Natural killer cell (primary cell): ENCODE measurements at regions of chr3 and their contacts with region 1.

Region 1: DNA sequence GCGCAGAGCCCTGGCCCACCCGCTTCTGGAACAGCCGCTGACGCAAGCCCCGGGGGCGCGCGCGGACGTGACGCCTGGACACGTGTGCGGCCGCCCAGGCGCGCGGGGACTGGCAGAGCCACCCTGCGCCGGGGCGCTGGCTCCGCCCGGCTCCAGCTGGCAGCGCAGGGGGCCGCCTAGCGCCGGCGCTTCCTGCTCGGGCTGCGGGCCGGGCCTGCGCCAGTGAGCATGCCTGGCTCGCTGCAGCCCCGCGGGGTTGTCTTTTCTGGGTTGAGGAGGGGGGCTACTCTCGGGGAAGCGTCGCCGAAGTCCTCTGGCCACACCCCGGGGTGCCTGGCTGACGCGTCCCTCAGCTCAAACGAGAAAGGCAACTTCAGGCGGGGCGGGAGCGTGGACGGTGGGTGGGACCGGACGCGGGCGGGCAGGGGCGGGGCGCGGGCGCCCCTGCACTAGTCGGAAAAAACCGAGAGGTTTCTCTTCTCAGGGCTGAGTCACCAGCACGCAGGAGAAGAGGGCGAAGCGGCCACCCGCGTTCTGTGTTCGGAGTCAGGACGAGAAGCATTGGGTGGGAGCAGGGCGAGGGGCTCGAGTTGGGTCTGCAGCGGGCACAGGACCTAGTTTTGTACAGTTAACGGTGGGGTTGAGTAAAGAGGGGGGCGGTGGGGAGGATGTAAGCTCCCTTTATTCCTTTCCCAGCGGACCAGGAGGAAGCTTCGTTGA is at the start of gene SIAH2:
- DNase-seq: peak; percentile 94 to 97
- ATAC-seq: peak; percentile 76 to 93 (median 81)
- H3K4me3 ChIP-seq: peak within 1 kb of the TSS; percentile 81
- H3K4me3 Mint-ChIP-seq: peak within 1 kb of the TSS; percentile 96
- H3K27ac ChIP-seq: peak within 1 kb of the TSS; percentile 99
- H3K27ac Mint-ChIP-seq: peak within 1 kb of the TSS; percentile 98 to 100
- H3K4me1 ChIP-seq: peaks cover 13% of the 10 kb centered on the region
- H3K4me1 Mint-ChIP-seq: peaks cover 43 to 46% of the 10 kb centered on the region in 2 donors
- H3K27me3 ChIP-seq: no peaks in the 10 kb centered on the region
- H3K27me3 Mint-ChIP-seq: no peaks in the 10 kb centered on the region
- CTCF ChIP-seq: no peak
- total RNA-seq, gene SIAH2: 22.7 to 25.7 (median 23.8) TPM

Region 2: GRCh38 chr3:150408221-150409102 is 354.8 kb before region 1 on chr3 and contains the start of gene TSC22D2:
- intact Hi-C with region 1: loop called (anchors 2 kb)
- DNase-seq: peak; percentile 97 to 99
- ATAC-seq: peak; percentile 68 to 86 (median 77)
- H3K4me3 ChIP-seq: peak within 1 kb of the TSS; percentile 98
- H3K4me3 Mint-ChIP-seq: peak within 1 kb of the TSS; percentile 92
- H3K27ac ChIP-seq: peak within 1 kb of the TSS; percentile 99
- H3K27ac Mint-ChIP-seq: peak within 1 kb of the TSS; percentile 90 to 96
- H3K4me1 ChIP-seq: peaks cover 16% of the 10 kb centered on the region
- H3K4me1 Mint-ChIP-seq: peaks cover 48 to 49% of the 10 kb centered on the region in 2 donors
- H3K27me3 ChIP-seq: no peaks in the 10 kb centered on the region
- H3K27me3 Mint-ChIP-seq: no peaks in the 10 kb centered on the region
- CTCF ChIP-seq: no peak
- total RNA-seq, gene TSC22D2: 50.1 to 66.3 (median 63.0) TPM

Region 3: DNA sequence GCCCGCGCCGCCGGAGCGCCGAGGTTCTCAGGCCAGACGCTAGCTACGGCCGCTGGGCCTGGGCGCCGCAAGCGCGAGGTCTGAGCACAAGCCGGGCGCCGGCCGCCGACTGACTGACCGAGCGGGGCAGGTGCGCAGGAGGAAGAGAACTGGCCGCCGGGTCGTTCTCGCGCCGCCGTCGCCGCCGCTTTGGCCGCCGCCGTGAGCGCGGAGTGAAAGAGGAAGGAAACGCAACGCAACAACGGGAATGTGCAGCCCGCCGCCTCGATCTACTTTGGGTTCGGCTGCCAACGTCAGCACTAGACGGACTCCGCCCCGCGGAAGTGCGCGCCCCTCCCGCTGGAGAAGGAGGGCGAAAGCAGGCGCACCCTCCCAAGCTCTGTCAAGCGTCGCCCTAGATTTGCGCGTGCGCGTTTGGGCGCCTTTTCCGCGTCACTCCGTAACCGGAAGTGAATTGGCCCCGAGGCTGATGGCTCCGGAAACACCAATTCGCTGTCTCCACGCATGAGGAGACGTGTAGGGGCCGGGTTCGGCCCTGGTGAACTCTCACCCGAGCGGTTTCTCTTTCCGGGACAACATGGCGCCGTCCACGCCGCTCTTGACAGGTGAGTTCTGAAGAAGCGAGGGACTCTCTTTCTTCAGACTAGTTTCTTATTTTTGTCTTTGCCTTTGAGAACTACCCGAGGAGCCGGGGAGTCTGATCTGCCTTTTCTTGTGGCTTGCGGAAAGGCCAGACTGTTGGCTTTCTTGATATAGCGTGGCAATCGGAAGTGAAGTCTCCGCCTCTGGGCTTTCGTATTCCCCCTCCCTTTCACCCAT is 216.8 kb before region 1 on chr3 and contains the starts of genes EIF2A and SERP1:
- intact Hi-C with region 1: loop called (anchors 1 kb)
- DNase-seq: peak; percentile 99 to 100
- ATAC-seq: peak; percentile 87 to 97 (median 88)
- H3K4me3 ChIP-seq: peak within 1 kb of the TSS; percentile 61
- H3K4me3 Mint-ChIP-seq: peak within 1 kb of the TSS; percentile 96
- H3K27ac ChIP-seq: peak within 1 kb of the TSS; percentile 87
- H3K27ac Mint-ChIP-seq: peak within 1 kb of the TSS; percentile 97
- H3K4me1 ChIP-seq: peaks cover 6% of the 10 kb centered on the region
- H3K4me1 Mint-ChIP-seq: peaks cover 61 to 69% of the 10 kb centered on the region in 2 donors
- H3K27me3 ChIP-seq: no peaks in the 10 kb centered on the region
- H3K27me3 Mint-ChIP-seq: no peaks in the 10 kb centered on the region
- CTCF ChIP-seq: no peak
- total RNA-seq, gene EIF2A: 102 to 124 (median 108) TPM
- total RNA-seq, gene SERP1: 91.1 to 106 (median 94.9) TPM

Region 4: DNA sequence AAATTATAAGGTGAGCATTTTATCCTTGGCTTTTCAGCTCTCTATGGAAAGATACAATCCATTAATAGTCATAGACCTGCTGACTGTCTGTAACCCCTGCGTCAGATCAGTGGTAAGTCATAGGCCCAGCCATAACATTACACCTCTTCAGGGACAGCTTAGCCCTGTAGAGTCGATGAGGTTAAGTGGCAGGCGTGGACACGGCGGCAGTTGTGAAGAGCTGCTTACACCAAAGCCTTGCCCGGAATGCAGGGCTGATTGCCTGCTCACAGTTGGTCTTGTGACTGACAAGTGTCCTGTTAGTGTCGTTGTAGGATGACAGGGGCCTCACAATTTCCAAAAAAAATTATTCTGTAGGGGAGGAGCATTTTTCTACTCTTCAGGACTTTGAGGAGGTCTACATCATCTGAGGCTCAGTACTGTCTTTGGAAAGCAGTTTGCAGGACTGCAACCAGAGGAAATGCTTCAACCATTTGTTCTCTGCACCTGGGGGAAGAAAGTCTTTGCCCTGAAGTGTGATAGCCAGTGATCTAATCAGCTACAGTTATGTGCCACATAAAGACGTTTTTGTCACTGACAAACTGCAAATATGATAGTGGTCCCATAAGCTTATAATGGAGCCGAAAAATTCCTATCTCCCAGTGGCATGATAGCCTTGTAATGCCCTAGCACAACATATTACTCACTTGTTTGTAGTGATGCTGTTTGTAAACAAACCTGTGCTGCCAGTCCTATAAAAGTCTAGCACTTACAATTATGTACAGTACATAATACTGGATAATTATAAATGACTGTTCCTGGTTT is 175.1 kb before region 1 on chr3:
- intact Hi-C with region 1: no loop called
- DNase-seq: no peak
- ATAC-seq: peak in 2 of 3 donors; percentile 25 to 59
- H3K4me3 ChIP-seq: no peak overlapping the region
- H3K4me3 Mint-ChIP-seq: no peak overlapping the region
- H3K27ac ChIP-seq: no peak overlapping the region
- H3K27ac Mint-ChIP-seq: peak overlapping the region in 1 of 2 donors; percentile 48
- H3K4me1 ChIP-seq: no peaks in the 10 kb centered on the region
- H3K4me1 Mint-ChIP-seq: no peaks in the 10 kb centered on the region
- H3K27me3 ChIP-seq: no peaks in the 10 kb centered on the region
- H3K27me3 Mint-ChIP-seq: no peaks in the 10 kb centered on the region
- CTCF ChIP-seq: no peak

Region 5: GRCh38 chr3:150703299-150704134 is 59.8 kb before region 1 on chr3 and contains the start of gene ERICH6:
- intact Hi-C with region 1: loop called (anchors 2 kb)
- DNase-seq: peak; percentile 84 to 86
- ATAC-seq: peak; percentile 90 to 97 (median 91)
- H3K4me3 ChIP-seq: peak within 1 kb of the TSS; percentile 84
- H3K4me3 Mint-ChIP-seq: peak within 1 kb of the TSS; percentile 99
- H3K27ac ChIP-seq: peak within 1 kb of the TSS; percentile 96
- H3K27ac Mint-ChIP-seq: peak within 1 kb of the TSS; percentile 99 to 100
- H3K4me1 ChIP-seq: peaks cover 27% of the 10 kb centered on the region
- H3K4me1 Mint-ChIP-seq: peaks cover 25 to 34% of the 10 kb centered on the region in 2 donors
- H3K27me3 ChIP-seq: no peaks in the 10 kb centered on the region
- H3K27me3 Mint-ChIP-seq: no peaks in the 10 kb centered on the region
- CTCF ChIP-seq: no peak
- total RNA-seq, gene ERICH6: 0.35 to 3.7 (median 3.6) TPM

Region 6: GRCh38 chr3:150721285-150722130 is 41.8 kb before region 1 on chr3:
- intact Hi-C with region 1: loop called (anchors 5 kb)
- DNase-seq: peak in 1 of 2 donors; percentile 84
- ATAC-seq: peak; percentile 87 to 96 (median 94)
- H3K4me3 ChIP-seq: no peak overlapping the region
- H3K4me3 Mint-ChIP-seq: no peak overlapping the region
- H3K27ac ChIP-seq: no peak overlapping the region
- H3K27ac Mint-ChIP-seq: no peak overlapping the region
- H3K4me1 ChIP-seq: peaks cover 3% of the 10 kb centered on the region
- H3K4me1 Mint-ChIP-seq: peaks cover 6 to 10% of the 10 kb centered on the region in 2 donors
- H3K27me3 ChIP-seq: no peaks in the 10 kb centered on the region
- H3K27me3 Mint-ChIP-seq: no peaks in the 10 kb centered on the region
- CTCF ChIP-seq: peak; percentile 84